Calu3 (cell line): ENCODE measurements at regions of chr2 and their contacts with region 1.

Region 1: GRCh38 chr2:187499941-187500532 is 52.0 kb upstream of the CALCRL start:
- DNase-seq: peak; percentile 72
- H3K4me3 Mint-ChIP-seq: no peak overlapping the region
- H3K27ac Mint-ChIP-seq: no peak overlapping the region
- H3K4me1 Mint-ChIP-seq: peaks cover 39% of the 10 kb centered on the region
- H3K27me3 Mint-ChIP-seq: no peaks in the 10 kb centered on the region
- CTCF ChIP-seq: peak; percentile 84

Region 2: DNA sequence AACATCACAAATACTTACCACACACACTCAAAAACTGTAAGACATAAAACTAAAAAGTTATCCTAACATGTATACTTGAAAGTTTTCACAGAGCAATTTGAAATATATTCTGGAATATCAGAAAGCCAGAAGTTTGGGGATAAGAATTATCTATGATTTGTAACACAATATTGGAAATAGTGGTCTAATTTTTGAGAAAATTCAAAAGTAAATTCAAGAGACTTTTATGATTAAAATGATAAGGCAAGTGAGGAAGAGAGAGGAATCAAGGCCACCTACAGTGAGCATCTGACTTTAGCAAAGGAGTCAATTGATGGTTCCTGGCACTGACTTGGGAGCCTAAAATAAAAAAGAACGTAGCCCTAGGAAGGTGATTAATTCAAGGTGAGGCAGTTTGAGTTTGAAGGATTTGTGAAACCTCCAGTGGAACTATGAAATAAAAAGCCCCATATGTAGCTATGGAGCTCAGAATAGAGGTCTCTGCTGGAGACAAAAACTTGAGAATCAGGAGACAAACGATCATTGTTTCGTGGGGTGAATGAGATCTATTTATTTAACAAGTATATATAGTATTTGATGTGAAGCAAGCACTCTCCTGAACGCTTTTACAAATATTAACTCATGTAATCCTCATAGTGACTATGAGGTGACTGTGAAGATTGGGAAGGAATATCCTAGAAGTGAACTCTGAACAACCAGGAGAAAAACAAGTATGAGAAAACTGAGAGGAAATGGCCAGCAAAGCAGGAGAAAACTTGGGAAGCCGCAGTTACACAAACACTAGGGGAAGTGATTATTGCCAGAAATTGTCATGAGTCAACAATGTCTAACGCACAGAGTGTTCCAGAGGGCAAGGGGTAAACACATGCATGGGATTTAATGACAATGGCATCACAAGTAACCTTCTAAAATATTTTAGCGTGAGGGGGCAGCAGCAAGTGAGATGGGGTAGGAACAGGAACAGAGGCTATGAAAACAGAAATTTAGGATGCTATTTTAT is 41.3 kb after region 1 on chr2:
- CTCF ChIA-PET with region 1: interaction called, 6 read pairs
- intact Hi-C with region 1: loop called (anchors 1 kb)
- DNase-seq: peak; percentile 31
- H3K4me3 Mint-ChIP-seq: peak overlapping the region; percentile 55
- H3K27ac Mint-ChIP-seq: peak overlapping the region; percentile 88
- H3K4me1 Mint-ChIP-seq: peaks cover 48% of the 10 kb centered on the region
- H3K27me3 Mint-ChIP-seq: no peaks in the 10 kb centered on the region
- CTCF ChIP-seq: no peak

Region 3: GRCh38 chr2:187554011-187554703 is 54.1 kb after region 1 on chr2 and contains the start of gene TFPI:
- CTCF ChIA-PET with region 1: interaction called, 6 read pairs
- intact Hi-C with region 1: loop called (anchors 2 kb)
- DNase-seq: peak; percentile 21
- H3K4me3 Mint-ChIP-seq: peak within 1 kb of the TSS; percentile 82
- H3K27ac Mint-ChIP-seq: peak within 1 kb of the TSS; percentile 92
- H3K4me1 Mint-ChIP-seq: peaks cover 31% of the 10 kb centered on the region
- H3K27me3 Mint-ChIP-seq: no peaks in the 10 kb centered on the region
- CTCF ChIP-seq: no peak
- total RNA-seq, gene TFPI: 125 and 135 TPM in 2 replicates

Region 4: GRCh38 chr2:187574969-187575750 is 75.1 kb after region 1 on chr2:
- CTCF ChIA-PET with region 1: interaction called, 85 read pairs
- intact Hi-C with region 1: loop called (anchors 1 kb)
- DNase-seq: no peak
- H3K4me3 Mint-ChIP-seq: no peak overlapping the region
- H3K27ac Mint-ChIP-seq: peak overlapping the region; percentile 74
- H3K4me1 Mint-ChIP-seq: peaks cover 22% of the 10 kb centered on the region
- H3K27me3 Mint-ChIP-seq: no peaks in the 10 kb centered on the region
- CTCF ChIP-seq: no peak

Region 5: DNA sequence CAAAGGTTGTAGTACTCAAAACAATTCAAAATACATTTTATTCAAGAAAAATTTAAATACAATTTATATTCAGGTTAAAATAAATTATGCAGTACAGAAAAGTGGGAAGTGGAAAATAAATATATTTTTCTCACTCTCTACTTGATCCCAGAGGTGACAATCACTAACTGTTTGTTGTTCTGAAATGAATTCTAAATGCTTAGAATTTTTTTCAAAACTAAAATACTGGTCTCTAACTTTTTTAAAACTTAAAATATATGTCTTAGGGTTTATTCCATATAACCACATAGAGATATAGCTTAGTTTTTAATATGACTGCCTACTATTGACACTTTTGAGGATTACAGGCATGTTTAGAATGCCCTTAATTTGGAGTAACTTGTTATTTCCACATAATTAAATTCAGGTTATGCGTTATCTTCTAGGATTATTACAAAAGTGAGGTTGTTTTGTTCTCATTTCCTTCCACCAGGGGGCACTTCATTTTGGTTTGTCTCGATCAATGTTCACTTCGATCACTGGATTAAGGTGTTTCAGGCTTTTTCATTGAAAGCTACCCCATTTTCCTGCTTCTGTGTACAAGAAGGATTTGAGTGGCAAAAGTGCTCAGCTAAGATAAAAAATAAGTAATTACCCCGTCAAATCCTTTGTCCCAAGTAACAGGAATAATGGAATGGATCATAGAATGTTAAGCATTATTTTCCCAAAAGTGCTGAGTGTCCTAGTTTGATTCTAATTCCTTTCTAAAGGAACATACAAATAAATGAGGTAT is 81.3 kb after region 1 on chr2:
- CTCF ChIA-PET with region 1: interaction called, 85 read pairs
- intact Hi-C with region 1: loop called (anchors 1 kb)
- DNase-seq: peak; percentile 58
- H3K4me3 Mint-ChIP-seq: peak overlapping the region; percentile 39
- H3K27ac Mint-ChIP-seq: peak overlapping the region; percentile 79
- H3K4me1 Mint-ChIP-seq: peaks cover 32% of the 10 kb centered on the region
- H3K27me3 Mint-ChIP-seq: no peaks in the 10 kb centered on the region
- CTCF ChIP-seq: peak; percentile 59

Region 6: GRCh38 chr2:187842978-187843847 is 343.2 kb after region 1 on chr2:
- CTCF ChIA-PET with region 1: interaction called, 10 read pairs
- intact Hi-C with region 1: loop called (anchors 1 kb)
- DNase-seq: peak; percentile 45
- H3K4me3 Mint-ChIP-seq: no peak overlapping the region
- H3K27ac Mint-ChIP-seq: no peak overlapping the region
- H3K4me1 Mint-ChIP-seq: peaks cover 17% of the 10 kb centered on the region
- H3K27me3 Mint-ChIP-seq: no peaks in the 10 kb centered on the region
- CTCF ChIP-seq: peak; percentile 56

Region 7: DNA sequence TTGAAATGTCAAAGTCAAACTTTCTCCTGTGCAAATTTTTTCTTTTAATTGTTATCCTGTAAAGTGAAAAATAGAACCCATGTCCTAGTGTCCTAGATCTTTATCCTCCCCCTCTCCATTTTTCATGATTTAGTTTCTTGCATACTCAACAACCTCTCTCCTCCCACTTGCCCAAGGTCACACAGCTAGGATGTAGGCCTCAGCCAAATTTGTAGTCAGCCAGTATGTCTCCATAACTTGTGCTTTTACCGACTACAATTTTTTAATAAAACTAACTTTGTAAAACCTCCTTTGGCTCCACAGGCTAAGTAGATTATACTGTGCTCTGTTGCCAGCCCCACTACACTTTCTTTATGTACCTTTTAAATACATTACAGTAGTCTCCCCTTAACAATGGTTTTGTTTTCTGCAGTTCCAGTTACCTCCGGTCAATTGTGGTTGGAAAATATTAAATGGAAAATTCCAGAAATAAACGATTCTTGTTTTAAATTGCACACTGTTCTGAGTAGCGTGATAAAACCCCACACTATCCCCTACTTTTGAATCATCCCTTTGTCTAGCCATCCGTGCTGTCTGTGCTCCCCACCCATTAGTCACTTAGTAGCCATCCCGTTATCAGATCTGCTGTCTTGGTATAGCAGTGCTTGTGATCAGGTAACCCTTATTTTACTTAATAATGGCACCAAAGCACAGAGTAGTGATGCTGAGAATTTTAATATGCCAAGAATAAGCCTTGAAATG is 814.4 kb after region 1 on chr2:
- CTCF ChIA-PET with region 1: no interaction called
- intact Hi-C with region 1: no loop called
- DNase-seq: no peak
- H3K4me3 Mint-ChIP-seq: peak overlapping the region; percentile 38
- H3K27ac Mint-ChIP-seq: peak overlapping the region; percentile 88
- H3K4me1 Mint-ChIP-seq: peaks cover 49% of the 10 kb centered on the region
- H3K27me3 Mint-ChIP-seq: no peaks in the 10 kb centered on the region
- CTCF ChIP-seq: no peak